B cell (primary cell): ENCODE measurements at regions of chr5 and their contacts with region 1.

Region 1: DNA sequence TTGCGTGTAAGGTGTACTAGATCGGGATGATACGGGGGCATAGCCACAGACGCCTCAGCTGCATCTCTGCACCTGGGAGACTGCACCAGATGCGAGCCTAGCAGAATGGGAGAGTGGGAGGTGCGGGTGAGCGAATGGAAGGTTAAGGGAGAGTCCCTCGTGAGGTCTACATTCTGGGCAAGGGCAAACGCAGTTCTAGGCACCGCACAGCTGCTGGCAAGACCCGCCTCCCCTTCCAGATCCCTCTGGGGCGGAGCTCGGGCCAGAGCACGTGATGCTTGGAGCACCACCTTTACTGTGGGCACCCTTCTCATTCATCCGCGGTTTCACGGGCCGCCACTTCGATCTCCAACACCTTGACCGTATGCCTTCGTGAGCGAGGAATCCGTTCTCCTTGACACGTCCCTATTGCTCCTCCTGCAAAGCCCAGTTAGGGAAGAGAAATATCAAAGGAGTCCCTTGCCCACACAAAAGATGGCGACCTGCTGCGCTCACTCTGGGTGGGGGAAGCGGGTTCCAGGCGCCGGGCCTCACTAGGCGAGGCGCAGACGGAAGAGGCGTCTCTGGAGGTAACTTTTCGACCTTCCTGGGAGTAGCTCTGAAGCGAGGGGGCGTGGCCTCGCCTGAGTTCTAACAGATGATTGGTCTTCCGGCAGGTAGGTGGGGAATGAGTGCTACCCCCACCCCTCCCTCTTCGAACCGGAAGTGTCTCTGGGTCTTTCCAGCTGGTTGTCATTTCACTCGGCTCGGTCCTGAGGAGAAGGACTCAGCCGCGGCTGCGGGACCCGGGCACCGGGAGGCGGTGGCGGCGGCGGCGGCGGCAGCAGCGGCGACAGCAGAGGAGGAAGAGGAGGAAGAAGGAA is at the start of gene CPEB4:
- DNase-seq: peak; percentile 99
- ATAC-seq: peak; percentile 89
- H3K4me3 ChIP-seq: peak within 1 kb of the TSS; percentile 75 to 96 (median 88)
- H3K4me3 Mint-ChIP-seq: peak within 1 kb of the TSS; percentile 95
- H3K27ac ChIP-seq: peak within 1 kb of the TSS; percentile 84 to 92
- H3K27ac Mint-ChIP-seq: peak within 1 kb of the TSS; percentile 99
- H3K4me1 ChIP-seq: peaks cover 62 to 66% of the 10 kb centered on the region in 2 donors
- H3K4me1 Mint-ChIP-seq: peaks cover 87% of the 10 kb centered on the region
- H3K27me3 ChIP-seq: no peaks in the 10 kb centered on the region
- H3K27me3 Mint-ChIP-seq: no peaks in the 10 kb centered on the region
- CTCF ChIP-seq: no peak
- total RNA-seq, gene CPEB4: 26.0 and 28.2 TPM in 2 replicates

Region 2: DNA sequence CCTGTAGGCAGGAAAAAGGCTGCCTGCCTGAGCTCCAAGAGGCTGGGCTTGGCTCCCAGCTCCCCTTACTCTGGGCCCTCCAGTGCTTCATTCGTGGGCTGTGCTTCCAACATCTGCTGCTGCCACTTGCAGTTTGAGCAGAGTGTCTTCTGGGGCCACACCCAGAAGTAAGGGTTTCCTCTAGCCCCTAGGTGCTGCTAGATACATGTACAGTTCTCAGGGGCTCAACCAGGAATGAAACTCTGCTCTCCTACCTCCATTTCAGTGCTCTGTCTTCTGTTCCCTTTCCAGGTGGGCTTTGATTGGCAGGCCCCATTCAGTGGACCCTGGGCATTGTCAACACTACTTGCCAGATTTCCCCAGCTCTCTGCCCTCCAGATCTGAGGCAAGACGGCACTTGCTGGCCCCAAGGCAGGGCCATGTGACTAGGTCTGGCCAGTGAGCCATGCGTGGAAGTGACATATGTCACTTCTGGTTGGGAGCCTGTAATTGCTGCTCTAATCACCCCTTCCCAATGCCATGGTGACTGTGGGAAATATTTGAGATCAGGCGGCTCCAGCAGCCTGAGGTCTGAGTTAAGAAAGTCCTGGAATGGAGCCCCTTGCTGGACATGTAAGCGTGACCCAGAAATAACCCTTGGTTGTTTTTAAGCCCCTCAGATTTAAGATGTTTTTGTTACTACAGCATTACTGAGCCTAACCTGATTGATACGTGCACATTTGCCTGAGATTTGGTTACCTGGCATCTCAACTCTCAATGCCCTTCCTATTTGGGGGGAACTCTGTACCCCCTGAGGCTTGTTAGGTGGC is 261.9 kb before region 1 on chr5:
- CTCF ChIA-PET with region 1: interaction called, 60 read pairs
- POLR2A ChIA-PET with region 1: no interaction called
- intact Hi-C with region 1: no loop called
- DNase-seq: peak; percentile 63
- ATAC-seq: peak; percentile 89
- H3K4me3 ChIP-seq: no peak overlapping the region
- H3K4me3 Mint-ChIP-seq: peak overlapping the region; percentile 50
- H3K27ac ChIP-seq: no peak overlapping the region
- H3K27ac Mint-ChIP-seq: peak overlapping the region; percentile 18
- H3K4me1 ChIP-seq: peaks cover 7 to 12% of the 10 kb centered on the region in 2 donors
- H3K4me1 Mint-ChIP-seq: peaks cover 15% of the 10 kb centered on the region
- H3K27me3 ChIP-seq: no peaks in the 10 kb centered on the region
- H3K27me3 Mint-ChIP-seq: no peaks in the 10 kb centered on the region
- CTCF ChIP-seq: peak; percentile 40

Region 3: DNA sequence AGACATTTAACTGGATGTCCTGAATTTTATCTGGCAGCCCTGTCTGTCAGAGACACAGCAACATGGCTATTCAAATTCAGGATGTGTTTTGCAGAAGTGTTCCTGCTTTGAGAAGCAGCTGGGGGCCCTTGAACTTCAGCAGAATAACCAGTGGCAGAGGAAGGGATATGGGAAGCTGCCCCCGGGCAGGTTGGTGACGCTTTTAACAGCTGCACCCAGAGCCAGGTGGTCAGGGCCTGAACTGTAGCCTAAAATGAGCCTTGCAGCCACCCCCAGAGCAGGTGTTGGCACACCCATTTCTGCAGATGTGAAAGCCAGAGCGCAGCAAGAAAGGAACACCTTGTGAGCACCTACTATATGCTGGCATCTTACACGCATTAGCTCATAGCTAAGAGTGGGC is 142.7 kb before region 1 on chr5:
- CTCF ChIA-PET with region 1: interaction called, 4 read pairs
- POLR2A ChIA-PET with region 1: interaction called, 3 read pairs
- intact Hi-C with region 1: loop called (anchors 2 kb)
- DNase-seq: peak; percentile 86
- ATAC-seq: peak; percentile 81
- H3K4me3 ChIP-seq: peak overlapping the region in 1 of 5 experiments; percentile 5
- H3K4me3 Mint-ChIP-seq: peak overlapping the region; percentile 57
- H3K27ac ChIP-seq: peak overlapping the region; percentile 37 to 62
- H3K27ac Mint-ChIP-seq: peak overlapping the region; percentile 86
- H3K4me1 ChIP-seq: peaks cover 40 to 60% of the 10 kb centered on the region in 2 donors
- H3K4me1 Mint-ChIP-seq: peaks cover 64% of the 10 kb centered on the region
- H3K27me3 ChIP-seq: no peaks in the 10 kb centered on the region
- H3K27me3 Mint-ChIP-seq: no peaks in the 10 kb centered on the region
- CTCF ChIP-seq: no peak

Region 4: GRCh38 chr5:173823711-173824528 is 63.9 kb before region 1 on chr5:
- CTCF ChIA-PET with region 1: interaction called, 18 read pairs
- POLR2A ChIA-PET with region 1: interaction called, 7 read pairs
- intact Hi-C with region 1: loop called (anchors 1 kb)
- DNase-seq: no peak
- ATAC-seq: no peak
- H3K4me3 ChIP-seq: no peak overlapping the region
- H3K4me3 Mint-ChIP-seq: peak overlapping the region; percentile 9
- H3K27ac ChIP-seq: peak overlapping the region; percentile 12 to 55
- H3K27ac Mint-ChIP-seq: peak overlapping the region; percentile 46
- H3K4me1 ChIP-seq: peaks cover 69 to 73% of the 10 kb centered on the region in 2 donors
- H3K4me1 Mint-ChIP-seq: peaks cover 74% of the 10 kb centered on the region
- H3K27me3 ChIP-seq: no peaks in the 10 kb centered on the region
- H3K27me3 Mint-ChIP-seq: no peaks in the 10 kb centered on the region
- CTCF ChIP-seq: no peak

Region 5: DNA sequence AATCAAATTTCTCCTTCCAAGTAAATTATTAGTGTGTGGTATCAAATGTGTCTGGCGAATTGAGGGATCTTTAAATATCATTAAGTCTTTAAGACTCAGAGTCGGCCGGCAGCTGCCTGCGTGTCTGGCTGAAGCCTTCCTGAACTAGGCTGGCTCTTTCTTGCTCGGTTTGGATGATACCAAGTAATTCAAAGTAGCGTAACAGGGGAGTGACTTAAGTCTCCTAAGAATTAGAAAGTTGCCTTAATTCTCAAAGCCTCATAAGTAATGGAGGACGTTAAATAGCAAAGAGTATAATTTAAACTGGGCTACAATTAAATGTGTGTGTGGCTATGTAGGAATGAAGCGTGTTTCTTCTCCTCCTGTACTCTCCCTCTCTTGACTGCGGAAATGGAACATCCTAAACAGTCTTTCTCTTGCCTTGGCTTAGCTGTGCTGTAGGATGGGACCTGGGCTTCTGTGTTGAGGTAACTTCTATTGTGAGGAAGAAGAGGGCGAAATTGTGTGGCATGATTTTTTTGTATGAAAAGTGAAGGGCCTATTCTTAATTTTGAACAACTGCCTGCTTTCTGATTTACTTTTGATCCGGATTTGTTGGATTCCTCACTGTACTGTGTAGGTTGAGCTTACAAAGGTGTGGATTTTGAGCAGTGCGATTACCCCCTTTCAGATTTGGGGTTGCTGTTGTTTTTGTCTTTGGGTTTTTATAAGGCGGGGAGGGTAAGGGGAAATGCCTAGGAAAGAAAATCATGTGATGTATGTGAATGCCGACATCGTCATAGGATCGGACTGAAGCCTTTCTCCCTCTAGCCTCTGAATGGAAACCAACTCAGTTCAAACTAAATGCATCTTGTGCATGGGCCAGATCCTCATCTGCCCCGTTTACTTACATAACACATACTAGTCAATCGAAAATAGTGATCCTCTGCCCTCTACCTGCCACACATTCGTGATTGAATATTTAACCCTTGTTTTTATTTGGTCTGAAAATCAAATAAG is 30.2 kb after region 1 on chr5:
- CTCF ChIA-PET with region 1: interaction called, 16 read pairs
- POLR2A ChIA-PET with region 1: interaction called, 11 read pairs
- intact Hi-C with region 1: loop called (anchors 1 kb)
- DNase-seq: peak; percentile 92
- ATAC-seq: peak; percentile 89
- H3K4me3 ChIP-seq: peak overlapping the region; percentile 43 to 81 (median 62)
- H3K4me3 Mint-ChIP-seq: no peak overlapping the region
- H3K27ac ChIP-seq: peak overlapping the region; percentile 82 to 95
- H3K27ac Mint-ChIP-seq: no peak overlapping the region
- H3K4me1 ChIP-seq: peaks cover 18 to 24% of the 10 kb centered on the region in 2 donors
- H3K4me1 Mint-ChIP-seq: peaks cover 22% of the 10 kb centered on the region
- H3K27me3 ChIP-seq: no peaks in the 10 kb centered on the region
- H3K27me3 Mint-ChIP-seq: no peaks in the 10 kb centered on the region
- CTCF ChIP-seq: no peak

Region 6: DNA sequence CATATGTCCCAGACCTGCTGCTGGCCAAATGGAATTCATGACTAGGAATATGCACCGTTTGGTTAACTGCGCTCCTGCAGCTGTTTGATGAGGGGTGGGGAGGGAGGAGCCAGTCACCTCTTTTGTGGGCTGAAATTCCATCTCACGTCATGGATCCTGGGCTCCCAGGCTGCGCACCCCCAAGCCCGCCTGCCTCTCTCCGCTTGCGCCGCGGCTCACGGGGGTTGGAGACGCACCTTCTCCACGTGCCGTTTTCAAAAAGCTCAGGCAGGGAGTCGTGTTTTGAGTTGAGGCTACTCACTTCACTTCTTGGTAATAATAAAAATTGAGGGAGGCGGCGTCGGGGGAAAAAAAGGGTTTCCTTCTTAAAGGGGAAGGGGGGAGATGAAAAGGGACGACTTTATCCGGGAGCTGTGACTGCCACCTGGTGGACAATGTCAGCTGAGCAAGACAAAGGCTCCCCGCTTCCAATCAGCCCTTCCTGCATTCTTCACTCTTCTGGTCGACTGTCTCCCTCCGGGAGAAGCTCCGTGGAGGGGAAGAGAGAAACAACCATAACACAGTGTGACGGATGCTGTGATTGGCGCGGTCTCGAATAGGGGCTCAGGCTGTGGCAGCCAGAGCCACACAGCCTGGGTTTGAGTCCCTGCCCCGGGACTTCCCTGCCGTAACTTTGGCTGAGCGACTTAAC is 85.2 kb after region 1 on chr5:
- CTCF ChIA-PET with region 1: interaction called, 10 read pairs
- POLR2A ChIA-PET with region 1: no interaction called
- intact Hi-C with region 1: no loop called
- DNase-seq: peak; percentile 87
- ATAC-seq: peak; percentile 85
- H3K4me3 ChIP-seq: peak overlapping the region in 4 of 5 experiments; percentile 14 to 50 (median 40)
- H3K4me3 Mint-ChIP-seq: peak overlapping the region; percentile 85
- H3K27ac ChIP-seq: no peak overlapping the region
- H3K27ac Mint-ChIP-seq: no peak overlapping the region
- H3K4me1 ChIP-seq: peaks cover 13 to 14% of the 10 kb centered on the region in 2 donors
- H3K4me1 Mint-ChIP-seq: peaks cover 11% of the 10 kb centered on the region
- H3K27me3 ChIP-seq: peaks cover 0 to 7% (median 3%) of the 10 kb centered on the region in 4 experiments
- H3K27me3 Mint-ChIP-seq: peaks cover 27% of the 10 kb centered on the region
- CTCF ChIP-seq: peak; percentile 87